ENCODE measurements at regions of chr3 and their contacts with region 1.

Region 1: DNA sequence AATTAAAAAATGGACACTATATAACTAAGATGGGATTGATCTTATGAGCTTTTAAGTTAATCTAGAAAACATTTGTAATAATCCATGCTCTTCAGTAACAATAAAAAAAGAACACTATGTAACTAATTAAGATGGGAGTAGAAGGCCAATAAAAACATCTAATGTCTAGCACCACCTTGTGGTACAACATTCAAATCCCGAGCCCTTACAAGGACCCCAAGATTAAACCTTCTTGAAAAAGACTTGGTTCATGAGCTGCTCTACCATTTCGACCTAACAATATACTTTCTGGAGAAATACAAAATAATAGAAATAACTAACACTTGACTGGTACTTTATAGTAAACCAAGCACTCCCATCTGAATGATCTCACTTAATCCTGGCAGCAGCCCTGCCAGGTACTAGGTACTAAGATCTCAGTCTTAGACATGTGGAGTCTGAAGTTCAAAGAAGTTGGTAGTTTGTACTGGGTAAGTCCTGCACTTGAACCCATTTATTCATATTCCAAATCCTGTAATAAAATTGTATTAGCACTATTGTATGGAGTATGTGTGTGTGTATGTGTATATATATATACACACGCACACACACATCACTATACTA is 21.8 kb downstream of the METTL6 start:
- DNase-seq: no peak
- H3K4me3 Mint-ChIP-seq: no peak overlapping the region
- H3K27ac Mint-ChIP-seq: no peak overlapping the region
- H3K4me1 Mint-ChIP-seq: no peaks in the 10 kb centered on the region
- H3K27me3 Mint-ChIP-seq: no peaks in the 10 kb centered on the region
- CTCF ChIP-seq: no peak

Region 2: DNA sequence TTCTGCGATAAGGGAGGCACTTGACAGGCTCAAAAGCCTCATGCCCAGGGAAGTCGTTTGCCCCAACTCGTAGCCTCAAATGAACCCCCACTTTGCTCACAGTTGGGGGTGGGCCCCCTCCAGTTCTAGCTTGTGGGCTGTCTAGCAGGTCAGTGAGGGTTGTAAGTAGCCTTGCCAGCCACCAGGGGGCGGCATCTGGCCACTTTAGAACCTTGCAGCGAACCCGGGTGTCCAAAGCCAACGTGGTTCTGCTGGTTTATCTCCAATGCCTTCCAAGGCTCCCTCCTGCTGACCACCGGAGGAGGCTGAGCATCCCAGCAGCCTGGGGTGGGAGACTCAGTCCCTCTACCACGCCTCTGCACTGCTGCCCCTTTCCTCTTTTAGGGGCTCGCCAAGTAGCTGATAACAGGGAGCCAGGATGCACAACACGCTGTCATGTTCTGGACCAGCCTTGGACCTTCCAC is 297.4 kb before region 1 on chr3:
- CTCF ChIA-PET with region 1: no interaction called
- intact Hi-C with region 1: loop called (anchors 2 kb)
- DNase-seq: peak; percentile 80
- H3K4me3 Mint-ChIP-seq: no peak overlapping the region
- H3K27ac Mint-ChIP-seq: no peak overlapping the region
- H3K4me1 Mint-ChIP-seq: peaks cover 13% of the 10 kb centered on the region
- H3K27me3 Mint-ChIP-seq: peaks cover 35% of the 10 kb centered on the region
- CTCF ChIP-seq: peak; percentile 86

Region 3: GRCh38 chr3:15205934-15206661 is 199.5 kb before region 1 on chr3 and contains the start of gene CAPN7:
- CTCF ChIA-PET with region 1: interaction called, 3 read pairs
- intact Hi-C with region 1: loop called (anchors 5 kb)
- DNase-seq: peak; percentile 97
- H3K4me3 Mint-ChIP-seq: peak within 1 kb of the TSS; percentile 74
- H3K27ac Mint-ChIP-seq: peak within 1 kb of the TSS; percentile 79
- H3K4me1 Mint-ChIP-seq: no peaks in the 10 kb centered on the region
- H3K27me3 Mint-ChIP-seq: no peaks in the 10 kb centered on the region
- CTCF ChIP-seq: peak; percentile 30
- total RNA-seq, gene CAPN7: 24.1 and 24.8 TPM in 2 replicates

Region 4: GRCh38 chr3:15268033-15268631 is 137.4 kb before region 1 on chr3:
- CTCF ChIA-PET with region 1: interaction called, 43 read pairs
- intact Hi-C with region 1: loop called (anchors 2 kb)
- DNase-seq: peak; percentile 87
- H3K4me3 Mint-ChIP-seq: no peak overlapping the region
- H3K27ac Mint-ChIP-seq: no peak overlapping the region
- H3K4me1 Mint-ChIP-seq: peaks cover 9% of the 10 kb centered on the region
- H3K27me3 Mint-ChIP-seq: no peaks in the 10 kb centered on the region
- CTCF ChIP-seq: peak; percentile 60

Region 5: DNA sequence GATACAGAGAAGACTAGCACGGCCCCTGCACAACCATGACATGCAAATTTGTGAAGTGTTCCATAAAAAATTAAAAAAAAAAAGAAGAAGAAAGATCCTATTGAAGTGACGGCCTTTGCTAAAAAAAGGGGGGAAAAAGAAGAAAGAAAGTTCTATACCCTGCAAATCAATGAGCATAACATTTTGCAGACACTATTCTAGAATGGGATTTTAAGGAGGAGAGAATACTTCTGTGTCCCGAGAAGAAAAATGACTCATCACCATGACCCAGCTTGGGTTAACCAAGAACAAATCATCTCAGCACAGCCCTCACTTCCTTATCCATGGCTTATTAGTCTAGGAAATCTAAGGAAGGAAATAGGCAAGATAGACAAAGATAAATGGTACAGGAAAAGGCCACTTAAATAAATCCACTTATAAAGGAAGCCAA is 65.7 kb before region 1 on chr3:
- CTCF ChIA-PET with region 1: no interaction called
- intact Hi-C with region 1: no loop called
- DNase-seq: no peak
- H3K4me3 Mint-ChIP-seq: no peak overlapping the region
- H3K27ac Mint-ChIP-seq: no peak overlapping the region
- H3K4me1 Mint-ChIP-seq: no peaks in the 10 kb centered on the region
- H3K27me3 Mint-ChIP-seq: peaks cover 14% of the 10 kb centered on the region
- CTCF ChIP-seq: no peak

Region 6: GRCh38 chr3:15839568-15839967 is 434.0 kb after region 1 on chr3:
- CTCF ChIA-PET with region 1: no interaction called
- intact Hi-C with region 1: no loop called
- DNase-seq: no peak
- H3K4me3 Mint-ChIP-seq: no peak overlapping the region
- H3K27ac Mint-ChIP-seq: no peak overlapping the region
- H3K4me1 Mint-ChIP-seq: peaks cover 7% of the 10 kb centered on the region
- H3K27me3 Mint-ChIP-seq: no peaks in the 10 kb centered on the region
- CTCF ChIP-seq: no peak

Measured in Calu3 (cell line).